Endothelial cell of umbilical vein (primary cell): ENCODE measurements at regions of chr1 and their contacts with region 1.

Region 1: GRCh38 chr1:219385786-219386427 is 212.2 kb downstream of the LYPLAL1 start:
- DNase-seq: peak; percentile 66
- H3K4me3 ChIP-seq: no peak overlapping the region
- H3K27ac ChIP-seq: no peak overlapping the region
- H3K4me1 ChIP-seq: no peaks in the 10 kb centered on the region
- H3K27me3 ChIP-seq: no peaks in the 10 kb centered on the region
- CTCF ChIP-seq: peak; percentile 70 to 81
- POLR2A ChIP-seq: no peak

Region 2: GRCh38 chr1:218557731-218558130 is 828.2 kb before region 1 on chr1:
- CTCF ChIA-PET with region 1: no interaction called
- POLR2A ChIA-PET with region 1: no interaction called
- dilution Hi-C with region 1: no loop called
- intact Hi-C with region 1: loop called (anchors 5 kb)
- DNase-seq: peak; percentile 96
- H3K4me3 ChIP-seq: no peak overlapping the region
- H3K27ac ChIP-seq: peak overlapping the region; percentile 65
- H3K4me1 ChIP-seq: peaks cover 13% of the 10 kb centered on the region
- H3K27me3 ChIP-seq: no peaks in the 10 kb centered on the region
- CTCF ChIP-seq: no peak
- POLR2A ChIP-seq: no peak

Region 3: GRCh38 chr1:218996362-218996761 is 389.5 kb before region 1 on chr1:
- CTCF ChIA-PET with region 1: no interaction called
- POLR2A ChIA-PET with region 1: no interaction called
- dilution Hi-C with region 1: no loop called
- intact Hi-C with region 1: loop called (anchors 10 kb)
- DNase-seq: peak; percentile 26
- H3K4me3 ChIP-seq: no peak overlapping the region
- H3K27ac ChIP-seq: no peak overlapping the region
- H3K4me1 ChIP-seq: no peaks in the 10 kb centered on the region
- H3K27me3 ChIP-seq: no peaks in the 10 kb centered on the region
- CTCF ChIP-seq: peak in 1 of 2 donors; percentile 23
- POLR2A ChIP-seq: no peak

Region 4: GRCh38 chr1:219081943-219082925 is 303.7 kb before region 1 on chr1:
- CTCF ChIA-PET with region 1: interaction called, 3 read pairs
- POLR2A ChIA-PET with region 1: no interaction called
- dilution Hi-C with region 1: no loop called
- intact Hi-C with region 1: loop called (anchors 5 kb)
- DNase-seq: no peak
- H3K4me3 ChIP-seq: no peak overlapping the region
- H3K27ac ChIP-seq: no peak overlapping the region
- H3K4me1 ChIP-seq: no peaks in the 10 kb centered on the region
- H3K27me3 ChIP-seq: no peaks in the 10 kb centered on the region
- CTCF ChIP-seq: no peak
- POLR2A ChIP-seq: no peak

Region 5: GRCh38 chr1:219209578-219209977 is 176.3 kb before region 1 on chr1:
- CTCF ChIA-PET with region 1: interaction called, 6 read pairs
- POLR2A ChIA-PET with region 1: no interaction called
- dilution Hi-C with region 1: no loop called
- intact Hi-C with region 1: loop called (anchors 1 kb)
- DNase-seq: no peak
- H3K4me3 ChIP-seq: no peak overlapping the region
- H3K27ac ChIP-seq: no peak overlapping the region
- H3K4me1 ChIP-seq: no peaks in the 10 kb centered on the region
- H3K27me3 ChIP-seq: no peaks in the 10 kb centered on the region
- CTCF ChIP-seq: no peak
- POLR2A ChIP-seq: no peak

Region 6: DNA sequence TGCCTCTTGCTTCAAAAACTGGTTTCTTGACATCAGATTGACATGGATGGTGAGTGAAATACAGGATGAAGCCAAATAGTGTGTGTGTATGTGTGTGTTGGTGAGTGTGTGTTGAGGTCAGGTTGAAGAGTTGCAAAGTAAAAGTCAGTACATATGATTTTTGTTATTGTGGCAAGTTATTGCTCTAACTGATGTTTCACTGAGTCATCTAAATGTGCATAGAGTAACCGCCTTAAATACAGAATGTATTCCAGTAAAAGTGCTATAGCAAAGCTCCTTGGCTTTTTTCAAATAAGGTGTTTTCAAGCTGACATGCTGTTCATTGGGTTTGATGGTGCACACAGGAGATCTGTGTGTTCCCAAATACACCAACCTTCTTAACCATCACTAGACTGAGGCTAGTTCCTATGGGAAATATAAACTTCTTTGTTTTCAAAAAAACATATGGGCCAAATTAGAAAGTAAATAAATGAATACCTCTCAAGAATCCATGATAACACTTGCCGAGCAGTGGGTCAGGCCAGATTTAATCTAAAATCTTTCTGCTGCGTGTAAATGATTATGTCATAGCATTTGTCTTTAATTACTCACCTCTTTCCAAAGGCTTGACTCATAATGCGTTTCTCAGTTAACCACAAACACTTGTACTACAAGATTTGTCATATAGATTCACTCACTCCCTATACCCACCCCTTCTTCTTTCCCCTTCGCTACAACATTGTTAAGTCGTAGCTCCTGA is 61.1 kb before region 1 on chr1:
- CTCF ChIA-PET with region 1: no interaction called
- POLR2A ChIA-PET with region 1: no interaction called
- dilution Hi-C with region 1: no loop called
- intact Hi-C with region 1: loop called (anchors 1 kb)
- DNase-seq: peak; percentile 83
- H3K4me3 ChIP-seq: no peak overlapping the region
- H3K27ac ChIP-seq: peak overlapping the region; percentile 78
- H3K4me1 ChIP-seq: peaks cover 44% of the 10 kb centered on the region
- H3K27me3 ChIP-seq: no peaks in the 10 kb centered on the region
- CTCF ChIP-seq: no peak
- POLR2A ChIP-seq: peak; percentile 63

Region 7: DNA sequence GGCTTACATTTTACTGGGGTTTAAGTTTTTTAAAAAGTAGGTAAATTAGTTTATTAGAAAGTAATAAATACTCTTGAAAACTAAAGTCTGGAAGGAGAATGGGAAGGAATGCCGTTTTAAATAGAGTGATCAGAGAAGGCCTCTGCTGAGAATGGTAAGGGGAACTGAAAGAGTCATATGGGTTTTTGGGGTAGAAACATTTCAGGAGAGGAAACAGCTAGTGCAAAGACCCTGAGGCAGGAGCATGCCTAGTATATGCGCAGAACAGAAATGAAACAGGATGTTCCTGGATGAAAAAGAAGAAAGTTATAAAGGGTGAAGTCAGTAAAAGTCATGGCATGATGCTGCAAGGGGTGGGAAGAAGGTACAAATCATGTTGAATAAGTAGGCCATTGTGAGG is 188.1 kb after region 1 on chr1:
- CTCF ChIA-PET with region 1: no interaction called
- POLR2A ChIA-PET with region 1: no interaction called
- dilution Hi-C with region 1: no loop called
- intact Hi-C with region 1: no loop called
- DNase-seq: no peak
- H3K4me3 ChIP-seq: no peak overlapping the region
- H3K27ac ChIP-seq: no peak overlapping the region
- H3K4me1 ChIP-seq: no peaks in the 10 kb centered on the region
- H3K27me3 ChIP-seq: no peaks in the 10 kb centered on the region
- CTCF ChIP-seq: no peak
- POLR2A ChIP-seq: no peak

Region 8: GRCh38 chr1:219660666-219661463 is 275.0 kb after region 1 on chr1:
- CTCF ChIA-PET with region 1: interaction called, 3 read pairs
- POLR2A ChIA-PET with region 1: no interaction called
- dilution Hi-C with region 1: no loop called
- intact Hi-C with region 1: loop called (anchors 5 kb)
- DNase-seq: peak; percentile 84
- H3K4me3 ChIP-seq: peak overlapping the region in 2 of 3 experiments; percentile 24 to 49
- H3K27ac ChIP-seq: no peak overlapping the region
- H3K4me1 ChIP-seq: peaks cover 2% of the 10 kb centered on the region
- H3K27me3 ChIP-seq: peaks cover 0 to 9% of the 10 kb centered on the region in 2 experiments
- CTCF ChIP-seq: peak; percentile 82 to 86
- POLR2A ChIP-seq: no peak

Region 9: DNA sequence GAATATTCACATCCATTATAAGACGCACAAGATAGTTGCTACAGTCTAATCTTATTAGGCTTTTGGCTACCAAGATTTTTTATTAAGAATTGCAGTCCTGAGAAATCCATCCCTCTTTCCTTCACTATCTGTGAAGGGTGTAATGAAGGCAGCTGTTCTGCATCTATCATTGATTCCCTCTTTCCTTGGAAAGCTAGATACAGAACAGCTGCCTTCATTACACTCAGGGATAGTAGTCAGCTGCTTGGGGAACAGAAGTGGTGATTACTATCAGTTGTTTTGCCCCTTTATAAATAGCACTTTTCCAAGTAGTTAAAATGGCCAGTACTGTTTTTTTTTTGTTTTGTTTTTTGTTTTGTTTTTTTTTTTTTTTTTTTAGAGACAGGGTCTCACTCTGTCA is 778.2 kb after region 1 on chr1:
- CTCF ChIA-PET with region 1: no interaction called
- POLR2A ChIA-PET with region 1: no interaction called
- dilution Hi-C with region 1: no loop called
- intact Hi-C with region 1: no loop called
- DNase-seq: no peak
- H3K4me3 ChIP-seq: no peak overlapping the region
- H3K27ac ChIP-seq: no peak overlapping the region
- H3K4me1 ChIP-seq: no peaks in the 10 kb centered on the region
- H3K27me3 ChIP-seq: no peaks in the 10 kb centered on the region
- CTCF ChIP-seq: no peak
- POLR2A ChIP-seq: no peak